HCT116 (cell line): ENCODE measurements at regions of chr11 and their contacts with region 1.

Region 1: GRCh38 chr11:16785520-16786128 is 47.2 kb downstream of the C11orf58 start:
- DNase-seq: peak; percentile 54
- ATAC-seq: peak; percentile 78
- H3K4me3 ChIP-seq: no peak overlapping the region
- H3K27ac ChIP-seq: no peak overlapping the region
- H3K4me1 ChIP-seq: peaks cover 31 to 48% of the 10 kb centered on the region in 2 experiments
- H3K27me3 ChIP-seq: no peaks in the 10 kb centered on the region
- CTCF ChIP-seq: peak; percentile 84 to 94 (median 93)
- POLR2A ChIP-seq: no peak
- RAD21 ChIP-seq: peak; percentile 89

Region 2: DNA sequence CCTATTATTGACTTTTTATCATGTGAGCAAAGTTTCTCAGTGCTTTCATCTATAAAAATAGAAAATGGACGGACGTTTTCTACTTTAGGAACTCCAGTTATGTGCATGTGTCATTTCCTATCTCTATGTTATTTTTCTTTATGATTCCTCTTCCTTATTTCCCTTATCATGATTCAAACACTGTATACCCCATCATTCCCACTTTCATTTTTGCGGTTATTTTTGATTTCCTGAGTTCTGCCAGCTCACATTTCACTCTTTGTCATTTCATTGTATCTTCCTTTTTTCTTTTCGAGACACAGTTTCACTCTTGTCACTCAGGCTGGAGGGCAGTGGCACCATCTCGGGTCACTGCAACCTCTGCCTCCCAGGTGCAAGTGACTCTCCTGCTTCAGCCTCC is 25.8 kb before region 1 on chr11:
- CTCF ChIA-PET with region 1: no interaction called
- POLR2A ChIA-PET with region 1: no interaction called
- RAD21 ChIA-PET with region 1: no interaction called
- intact Hi-C with region 1: no loop called
- DNase-seq: no peak
- ATAC-seq: no peak
- H3K4me3 ChIP-seq: no peak overlapping the region
- H3K27ac ChIP-seq: no peak overlapping the region
- H3K4me1 ChIP-seq: no peaks in the 10 kb centered on the region
- H3K27me3 ChIP-seq: no peaks in the 10 kb centered on the region
- CTCF ChIP-seq: no peak
- POLR2A ChIP-seq: no peak
- RAD21 ChIP-seq: no peak

Region 3: GRCh38 chr11:16883174-16883573 is 97.5 kb after region 1 on chr11:
- CTCF ChIA-PET with region 1: interaction called, 6 read pairs
- POLR2A ChIA-PET with region 1: no interaction called
- RAD21 ChIA-PET with region 1: no interaction called
- intact Hi-C with region 1: loop called (anchors 1 kb)
- DNase-seq: peak; percentile 39
- ATAC-seq: peak; percentile 82
- H3K4me3 ChIP-seq: no peak overlapping the region
- H3K27ac ChIP-seq: no peak overlapping the region
- H3K4me1 ChIP-seq: peaks cover 5 to 20% of the 10 kb centered on the region in 2 experiments; a peak in 3 of 4 replicates
- H3K27me3 ChIP-seq: no peaks in the 10 kb centered on the region
- CTCF ChIP-seq: peak; percentile 36 to 60 (median 45); a peak in 4 of 6 replicates
- POLR2A ChIP-seq: no peak
- RAD21 ChIP-seq: peak; percentile 62

Region 4: DNA sequence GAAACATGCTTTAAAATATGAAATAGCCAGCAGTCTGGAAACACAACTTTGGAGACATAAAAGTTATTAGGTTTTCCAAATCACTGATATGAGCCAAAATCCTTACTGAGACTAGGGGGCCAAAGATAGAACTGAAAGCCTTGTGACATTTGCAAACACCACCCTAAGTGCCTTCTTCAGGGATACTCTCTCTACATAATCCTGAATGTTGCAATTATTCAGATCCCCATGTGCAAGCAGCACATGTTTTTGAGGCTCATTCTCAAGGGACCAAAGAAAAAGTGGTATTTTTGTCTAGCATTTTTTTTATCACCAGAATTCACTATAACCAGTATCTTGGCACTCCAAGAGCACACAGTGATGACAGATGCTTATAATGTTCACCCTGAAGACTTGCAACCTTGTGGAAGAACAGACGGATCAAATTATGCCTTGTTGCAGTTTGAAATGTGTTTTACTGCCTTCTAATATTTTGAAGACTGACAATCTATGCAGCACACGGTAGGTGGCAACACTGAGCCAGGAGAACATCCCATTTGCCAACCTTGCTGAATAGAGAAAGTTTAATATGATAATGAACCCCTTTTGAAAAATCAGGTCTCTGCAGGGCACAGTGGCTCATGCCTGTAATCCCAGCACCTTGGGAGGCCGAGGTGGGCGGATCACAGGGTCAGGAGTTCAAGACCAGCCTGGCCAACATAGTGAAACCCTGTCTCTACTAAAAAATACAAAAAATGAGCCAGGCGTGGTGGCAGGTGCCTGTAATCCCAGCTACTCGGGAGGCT is 150.1 kb after region 1 on chr11:
- CTCF ChIA-PET with region 1: no interaction called
- POLR2A ChIA-PET with region 1: no interaction called
- RAD21 ChIA-PET with region 1: interaction called in 1 of 2 experiments, 3 read pairs
- intact Hi-C with region 1: loop called (anchors 5 kb)
- DNase-seq: peak; percentile 32
- ATAC-seq: peak; percentile 89
- H3K4me3 ChIP-seq: no peak overlapping the region
- H3K27ac ChIP-seq: no peak overlapping the region
- H3K4me1 ChIP-seq: peaks cover 0 to 4% of the 10 kb centered on the region in 2 experiments; a peak in 1 of 4 replicates
- H3K27me3 ChIP-seq: no peaks in the 10 kb centered on the region
- CTCF ChIP-seq: peak; percentile 70 to 79 (median 73); a peak in 5 of 6 replicates
- POLR2A ChIP-seq: no peak
- RAD21 ChIP-seq: peak; percentile 72

Region 5: GRCh38 chr11:17063171-17064002 is 277.8 kb after region 1 on chr11:
- CTCF ChIA-PET with region 1: interaction called, 10 read pairs
- POLR2A ChIA-PET with region 1: no interaction called
- RAD21 ChIA-PET with region 1: interaction called, 4 to 5 read pairs
- intact Hi-C with region 1: loop called (anchors 1 kb)
- DNase-seq: peak; percentile 42
- ATAC-seq: peak; percentile 99
- H3K4me3 ChIP-seq: no peak overlapping the region
- H3K27ac ChIP-seq: no peak overlapping the region
- H3K4me1 ChIP-seq: no peaks in the 10 kb centered on the region
- H3K27me3 ChIP-seq: no peaks in the 10 kb centered on the region
- CTCF ChIP-seq: peak; percentile 90 to 94 (median 90)
- POLR2A ChIP-seq: no peak
- RAD21 ChIP-seq: peak; percentile 97